H1 (cell line): ENCODE measurements at regions of chr2 and their contacts with region 1.

Region 1: DNA sequence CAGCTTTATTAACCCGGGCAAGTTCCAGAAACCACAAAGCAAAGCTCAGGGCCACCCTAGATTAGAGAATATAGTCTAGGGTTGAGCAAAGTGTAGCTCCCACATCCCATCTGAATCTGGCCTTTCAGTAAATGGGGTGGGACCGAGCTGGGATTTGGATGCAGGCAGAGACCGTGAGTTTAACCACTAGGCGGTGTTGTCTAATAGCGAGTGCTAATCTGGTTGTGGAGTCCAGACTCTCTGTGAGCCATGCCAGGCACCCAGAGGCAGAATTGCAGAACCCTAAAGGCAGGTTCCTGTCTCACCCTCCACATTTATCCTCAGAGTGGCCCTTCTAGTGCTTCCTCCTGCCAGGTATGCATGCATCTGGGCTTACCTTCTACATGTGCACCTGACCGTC is 435.9 kb downstream of the TSN start:
- DNase-seq: peak in 1 of 2 experiments; percentile 63
- H3K4me3 ChIP-seq: no peak overlapping the region
- H3K27ac ChIP-seq: no peak overlapping the region
- H3K4me1 ChIP-seq: peaks cover 0 to 3% (median 0%) of the 10 kb centered on the region in 4 experiments; a peak in 1 of 7 replicates
- H3K27me3 ChIP-seq: no peaks in the 10 kb centered on the region
- CTCF ChIP-seq: peak; percentile 69 to 94 (median 85)
- EP300 ChIP-seq: no peak
- POLR2A ChIP-seq: no peak
- RAD21 ChIP-seq: peak; percentile 88 to 93

Region 2: DNA sequence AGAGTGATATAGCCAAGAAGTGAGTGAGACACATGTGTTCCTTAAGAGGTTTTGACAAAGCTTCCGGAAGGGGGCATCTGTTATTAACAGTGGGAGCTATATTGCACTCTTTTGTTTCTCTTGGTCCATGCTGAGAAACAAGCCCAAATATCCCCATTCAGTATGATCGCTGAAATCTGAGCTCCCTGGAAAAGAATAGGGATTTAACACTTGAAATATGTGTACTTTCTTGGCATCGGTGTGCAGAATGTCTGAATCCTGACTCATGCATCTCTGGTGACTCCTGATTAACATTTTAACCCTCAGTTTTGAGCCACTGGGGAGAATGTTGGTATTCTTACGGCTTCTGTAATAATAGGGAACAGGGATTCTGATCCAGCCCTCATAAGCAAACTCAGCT is 12.2 kb after region 1 on chr2:
- CTCF ChIA-PET with region 1: interaction called, 23 read pairs
- POLR2A ChIA-PET with region 1: no interaction called
- DNase-seq: no peak
- H3K4me3 ChIP-seq: no peak overlapping the region
- H3K27ac ChIP-seq: no peak overlapping the region
- H3K4me1 ChIP-seq: no peaks in the 10 kb centered on the region
- H3K27me3 ChIP-seq: no peaks in the 10 kb centered on the region
- CTCF ChIP-seq: no peak
- EP300 ChIP-seq: no peak
- POLR2A ChIP-seq: no peak
- RAD21 ChIP-seq: no peak